ENCODE measurements at regions of chr9 and their contacts with region 1.

Region 1: GRCh38 chr9:121317742-121318489 is 50.0 kb downstream of the GSN start:
- DNase-seq: no peak

Region 2: DNA sequence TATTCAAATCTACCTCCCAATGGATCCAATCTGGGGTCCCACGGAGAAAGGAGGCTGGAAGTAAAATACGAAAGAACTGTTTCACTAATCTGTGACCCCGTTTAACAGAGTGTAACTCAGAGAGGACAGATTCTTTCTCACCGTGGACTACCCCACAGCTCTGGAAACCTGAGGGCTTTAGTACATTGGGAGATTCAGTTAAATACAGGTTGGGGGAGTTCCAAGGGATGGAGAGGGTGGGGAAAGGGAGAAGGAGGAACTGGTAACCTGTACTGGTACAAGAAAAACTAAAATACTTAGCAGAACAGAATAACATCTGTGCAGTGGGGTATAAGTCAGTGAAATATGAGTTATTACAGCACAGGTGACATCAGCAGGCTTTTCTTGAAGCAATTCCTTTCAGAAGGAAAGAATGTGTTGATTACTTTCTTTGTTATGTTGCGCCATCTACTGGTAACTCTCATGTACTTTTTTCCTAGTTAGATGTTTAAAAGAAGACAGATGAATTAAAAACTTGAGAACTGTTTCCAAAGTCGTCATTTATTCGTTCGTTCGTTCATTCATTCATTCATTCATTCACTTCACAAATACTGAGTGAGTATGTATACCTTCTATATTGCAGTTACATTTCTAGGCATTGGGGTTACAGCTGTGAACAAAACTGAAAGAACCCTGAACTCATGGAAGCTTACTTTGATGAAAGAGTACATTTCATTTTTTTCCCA is 82.1 kb after region 1 on chr9:
- in situ Hi-C with region 1: loop called (anchors 10 kb)
- DNase-seq: peak; percentile 79